ENCODE measurements at regions of chr2 and their contacts with region 1.

Region 1: DNA sequence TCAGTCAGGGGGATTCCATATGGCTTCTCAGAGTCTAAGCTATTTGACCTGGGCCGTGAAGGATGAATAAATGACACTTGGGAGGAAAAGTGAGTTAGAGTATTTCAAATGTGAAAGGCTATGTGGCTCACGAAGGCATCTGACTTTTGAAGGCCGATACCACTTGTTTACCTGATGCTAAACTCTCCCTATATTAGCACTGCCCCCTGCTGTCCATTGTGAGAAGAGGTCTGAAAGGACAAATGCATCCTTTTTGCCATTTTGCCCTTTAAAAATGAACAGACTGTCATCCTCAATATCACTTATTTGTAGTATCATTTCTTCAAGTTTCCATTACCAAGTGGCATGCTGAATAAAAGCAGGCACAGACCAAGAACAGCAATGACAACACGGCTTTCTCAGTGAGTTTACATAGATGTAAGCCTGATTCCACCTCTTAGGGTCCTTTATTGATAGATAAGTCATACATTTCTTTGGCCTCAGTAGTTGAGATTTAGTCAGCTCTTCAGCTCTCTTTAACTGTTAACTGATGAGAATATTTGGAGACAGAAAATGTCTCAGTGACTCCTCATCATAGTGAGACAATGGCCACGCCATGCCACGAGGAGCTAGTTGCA is 40.1 kb downstream of the DOCK10 start:
- DNase-seq: peak; percentile 85
- ATAC-seq: peak; percentile 80
- H3K4me3 Mint-ChIP-seq: no peak overlapping the region
- H3K27ac Mint-ChIP-seq: peak overlapping the region; percentile 78
- H3K4me1 Mint-ChIP-seq: peaks cover 80% of the 10 kb centered on the region
- H3K27me3 Mint-ChIP-seq: no peaks in the 10 kb centered on the region

Region 2: DNA sequence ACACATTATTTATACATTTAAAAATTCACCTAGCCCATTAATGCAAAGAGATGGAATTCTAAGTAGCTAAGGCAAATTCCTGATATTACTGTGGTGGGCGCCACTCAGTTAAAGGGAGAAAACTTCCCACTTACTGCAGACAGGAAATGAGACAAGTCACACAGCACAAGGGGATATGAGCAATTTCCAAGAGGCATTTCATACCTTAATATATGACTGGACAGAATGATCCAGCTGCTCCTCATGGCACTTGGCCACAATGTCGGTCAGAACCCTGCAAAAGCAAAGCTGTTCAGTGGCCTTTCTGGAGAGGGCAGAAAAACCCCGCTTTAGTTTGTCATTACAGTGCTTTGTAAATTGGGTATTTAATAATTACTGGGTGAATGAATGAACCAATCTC is 164.6 kb before region 1 on chr2:
- CTCF ChIA-PET with region 1: no interaction called
- POLR2A ChIA-PET with region 1: no interaction called
- DNase-seq: no peak
- ATAC-seq: no peak
- H3K4me3 Mint-ChIP-seq: no peak overlapping the region
- H3K27ac Mint-ChIP-seq: no peak overlapping the region
- H3K4me1 Mint-ChIP-seq: no peaks in the 10 kb centered on the region
- H3K27me3 Mint-ChIP-seq: no peaks in the 10 kb centered on the region

Region 3: GRCh38 chr2:224938651-224939182 is 63.4 kb before region 1 on chr2:
- CTCF ChIA-PET with region 1: interaction called, 89 read pairs
- POLR2A ChIA-PET with region 1: interaction called, 5 read pairs
- DNase-seq: no peak
- ATAC-seq: peak; percentile 62
- H3K4me3 Mint-ChIP-seq: peak overlapping the region; percentile 63
- H3K27ac Mint-ChIP-seq: peak overlapping the region; percentile 83
- H3K4me1 Mint-ChIP-seq: peaks cover 78% of the 10 kb centered on the region
- H3K27me3 Mint-ChIP-seq: no peaks in the 10 kb centered on the region

Region 4: DNA sequence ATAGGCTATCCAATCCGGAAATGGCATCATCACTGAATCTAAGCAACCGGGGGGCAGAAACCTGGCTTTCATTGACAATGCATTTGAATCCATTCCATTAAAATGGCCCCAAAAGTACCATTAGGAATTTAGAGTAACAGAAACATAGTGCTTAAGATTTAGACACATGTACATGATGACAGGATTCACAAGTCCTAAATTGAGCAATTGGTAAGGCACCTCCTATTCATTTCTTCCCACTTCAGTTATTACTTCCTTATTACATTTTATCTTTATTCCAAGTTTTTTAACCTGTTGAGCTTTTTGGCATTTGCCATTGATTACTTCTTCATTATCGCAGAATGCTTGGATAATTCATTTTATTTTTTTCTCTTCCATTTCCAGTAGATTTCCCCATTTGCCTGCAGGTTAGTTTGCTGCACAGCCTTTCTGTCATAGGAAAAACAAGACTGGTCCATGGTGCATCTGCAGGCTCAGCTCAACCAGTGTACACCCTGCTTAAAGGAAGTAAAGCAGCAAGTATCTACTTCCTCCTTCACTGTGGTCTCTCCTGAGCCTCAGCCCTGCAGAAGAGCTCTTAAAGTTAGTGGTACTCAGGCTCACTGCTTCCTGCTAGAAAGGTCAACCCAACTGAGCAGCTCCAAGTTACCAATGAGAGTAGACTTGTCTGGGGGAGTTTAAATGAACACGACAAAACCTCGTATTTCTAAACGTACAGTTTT is 49.0 kb before region 1 on chr2:
- CTCF ChIA-PET with region 1: interaction called, 10 read pairs
- POLR2A ChIA-PET with region 1: no interaction called
- DNase-seq: peak; percentile 76
- ATAC-seq: peak; percentile 94
- H3K4me3 Mint-ChIP-seq: peak overlapping the region; percentile 67
- H3K27ac Mint-ChIP-seq: peak overlapping the region; percentile 89
- H3K4me1 Mint-ChIP-seq: peaks cover 88% of the 10 kb centered on the region
- H3K27me3 Mint-ChIP-seq: no peaks in the 10 kb centered on the region

Region 5: DNA sequence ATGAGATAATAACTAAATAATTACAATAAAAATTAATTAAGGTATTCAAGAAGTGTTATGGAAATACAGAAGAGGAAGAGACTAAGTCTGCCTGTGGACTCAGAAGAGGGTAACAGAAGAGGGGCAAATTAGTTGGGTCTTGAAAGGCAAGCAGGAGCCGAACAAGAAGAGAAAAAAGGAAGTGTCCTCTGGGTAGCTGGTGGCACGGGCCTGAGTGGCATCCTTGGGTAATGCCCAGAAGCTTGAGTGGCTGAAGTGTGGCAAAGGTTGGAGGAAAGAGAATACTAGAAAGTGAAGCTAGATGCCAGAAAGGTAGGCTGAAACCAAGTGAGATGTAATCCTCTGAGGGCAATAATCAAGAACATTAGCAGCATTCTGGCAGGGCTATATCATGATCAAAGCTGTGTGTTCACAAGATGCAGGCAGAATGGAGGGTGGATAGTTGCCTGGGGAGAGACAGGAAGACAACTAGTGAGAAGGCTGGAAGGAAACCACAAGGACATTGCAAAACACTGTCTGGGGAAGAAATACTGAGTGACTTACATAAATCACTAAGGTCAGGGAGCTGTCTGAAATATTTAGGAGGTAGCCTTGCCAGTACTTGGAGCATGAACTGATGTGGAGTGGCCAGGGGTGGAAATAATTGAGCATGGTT is 23.9 kb after region 1 on chr2:
- CTCF ChIA-PET with region 1: interaction called, 14 read pairs
- POLR2A ChIA-PET with region 1: no interaction called
- DNase-seq: no peak
- ATAC-seq: peak; percentile 71
- H3K4me3 Mint-ChIP-seq: peak overlapping the region; percentile 4
- H3K27ac Mint-ChIP-seq: peak overlapping the region; percentile 70
- H3K4me1 Mint-ChIP-seq: peaks cover 71% of the 10 kb centered on the region
- H3K27me3 Mint-ChIP-seq: no peaks in the 10 kb centered on the region

Region 6: DNA sequence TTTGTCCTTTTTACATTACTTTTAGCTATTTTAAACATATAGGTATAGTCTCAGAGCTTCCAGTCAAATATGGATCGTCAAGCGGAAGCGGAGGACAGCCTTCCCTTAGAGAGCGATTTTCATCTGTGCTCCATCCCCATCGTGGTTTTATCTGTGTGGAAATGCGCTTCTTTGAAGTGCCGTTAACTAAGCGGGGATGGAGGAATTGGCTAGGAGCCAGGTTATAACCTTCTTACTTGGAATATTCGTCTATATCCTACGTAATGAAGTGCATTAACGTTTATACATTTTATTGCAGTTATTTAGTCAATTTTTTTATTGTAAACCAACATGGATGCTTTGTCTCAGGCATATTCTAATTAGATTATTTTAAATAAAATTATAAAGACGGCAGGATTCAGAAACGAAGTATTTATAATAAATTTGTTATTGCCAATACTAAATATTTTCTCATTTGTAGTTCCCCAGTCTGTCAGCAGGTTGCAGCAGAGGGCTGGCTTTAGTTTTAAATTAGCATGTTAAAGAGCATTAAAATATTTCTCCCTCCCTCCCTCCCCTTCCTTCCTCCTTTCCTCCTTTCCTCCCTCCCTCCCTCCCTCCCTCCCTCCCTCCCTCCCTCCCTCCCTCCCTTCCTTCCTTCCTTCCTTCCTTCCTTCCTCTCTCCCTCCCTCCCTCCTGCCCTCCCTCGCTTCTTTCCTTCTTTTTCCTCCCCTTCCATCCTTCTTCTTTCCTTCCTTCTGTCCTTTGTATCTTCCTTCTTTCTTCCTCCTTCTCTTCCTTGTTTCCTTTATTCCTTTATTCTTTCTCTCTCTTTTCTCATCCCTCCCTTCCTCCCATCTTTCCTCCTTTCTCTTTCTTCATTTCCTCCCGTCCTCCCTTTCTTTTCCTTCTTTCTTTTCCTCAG is 120.7 kb after region 1 on chr2:
- CTCF ChIA-PET with region 1: no interaction called
- POLR2A ChIA-PET with region 1: no interaction called
- DNase-seq: peak; percentile 37
- ATAC-seq: no peak
- H3K4me3 Mint-ChIP-seq: no peak overlapping the region
- H3K27ac Mint-ChIP-seq: no peak overlapping the region
- H3K4me1 Mint-ChIP-seq: no peaks in the 10 kb centered on the region
- H3K27me3 Mint-ChIP-seq: no peaks in the 10 kb centered on the region

Measured in activated CD8-positive, alpha-beta T cell treated with anti-CD3 and anti-CD28 coated beads, Interleukin-2, amount 10 ng/mL, durations not matched to agents 7 days and 5 days (primary cell).